ENCODE measurements at regions of chr10 and their contacts with region 1.

Region 1: GRCh38 chr10:25113191-25114035 is 61.4 kb upstream of the GPR158 start:
- DNase-seq: peak; percentile 51
- ATAC-seq: peak; percentile 36
- H3K4me3 ChIP-seq: no peak overlapping the region
- H3K4me3 Mint-ChIP-seq: no peak overlapping the region
- H3K27ac ChIP-seq: no peak overlapping the region
- H3K27ac Mint-ChIP-seq: no peak overlapping the region
- H3K4me1 ChIP-seq: no peaks in the 10 kb centered on the region
- H3K4me1 Mint-ChIP-seq: peaks cover 3% of the 10 kb centered on the region
- H3K27me3 ChIP-seq: no peaks in the 10 kb centered on the region
- H3K27me3 Mint-ChIP-seq: peaks cover 20% of the 10 kb centered on the region
- CTCF ChIP-seq: peak; percentile 63

Region 2: DNA sequence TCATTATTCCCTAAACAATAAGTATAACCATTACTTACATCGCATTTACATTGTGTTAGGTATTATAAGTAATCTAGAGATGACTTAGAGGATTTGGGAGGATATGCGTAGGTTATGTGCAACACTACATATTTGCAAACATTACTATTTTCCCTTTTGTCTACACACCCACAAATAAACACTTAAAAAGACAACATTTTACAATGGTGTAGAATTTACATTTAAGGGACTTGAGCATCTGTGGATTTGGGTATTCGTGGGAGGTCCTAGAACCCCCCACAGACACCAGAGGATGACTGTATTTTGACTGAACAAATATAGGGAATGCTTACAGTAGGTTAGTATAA is 600.5 kb after region 1 on chr10:
- CTCF ChIA-PET with region 1: interaction called, 7 read pairs
- POLR2A ChIA-PET with region 1: no interaction called
- intact Hi-C with region 1: loop called (anchors 2 kb)
- DNase-seq: no peak
- ATAC-seq: no peak
- H3K4me3 ChIP-seq: no peak overlapping the region
- H3K4me3 Mint-ChIP-seq: no peak overlapping the region
- H3K27ac ChIP-seq: no peak overlapping the region
- H3K27ac Mint-ChIP-seq: no peak overlapping the region
- H3K4me1 ChIP-seq: no peaks in the 10 kb centered on the region
- H3K4me1 Mint-ChIP-seq: no peaks in the 10 kb centered on the region
- H3K27me3 ChIP-seq: peaks cover 0 to 2% (median 0%) of the 10 kb centered on the region in 4 experiments
- H3K27me3 Mint-ChIP-seq: peaks cover 17% of the 10 kb centered on the region
- CTCF ChIP-seq: no peak